Body of pancreas (tissue), 4 donors: ENCODE measurements at regions of chr1 and their contacts with region 1.

Region 1: GRCh38 chr1:6052543-6053205 is 7.0 kb downstream of the KCNAB2 start:
- DNase-seq: peak; percentile 62 to 77 (median 66)
- ATAC-seq: no peak
- H3K4me3 ChIP-seq: no peak overlapping the region
- H3K27ac ChIP-seq: no peak overlapping the region
- H3K4me1 ChIP-seq: no peaks in the 10 kb centered on the region
- H3K27me3 ChIP-seq: no peaks in the 10 kb centered on the region
- CTCF ChIP-seq: peak in 5 of 7 experiments; percentile 14 to 40 (median 22)
- POLR2A ChIP-seq: no peak

Region 2: DNA sequence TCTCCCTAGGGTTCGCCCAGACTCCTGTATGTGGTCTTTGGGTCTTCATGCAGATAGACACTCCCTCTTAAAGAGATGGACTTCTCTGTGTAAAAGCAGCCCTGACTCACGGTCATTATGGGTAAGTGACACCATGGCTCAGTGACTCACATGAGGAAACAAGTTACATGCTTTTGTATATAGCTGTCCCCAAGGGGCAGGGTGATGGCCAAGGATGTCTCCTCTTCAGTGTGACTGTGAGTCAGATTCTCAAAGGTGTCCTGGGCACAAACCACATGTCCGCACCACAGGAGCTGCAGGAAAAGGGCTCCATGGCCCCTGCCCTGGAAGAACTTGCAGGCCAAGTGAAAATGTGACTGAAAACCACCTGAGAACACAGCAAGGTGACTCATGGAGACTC is 440.8 kb before region 1 on chr1:
- intact Hi-C with region 1: no loop called
- DNase-seq: no peak
- ATAC-seq: no peak
- H3K4me3 ChIP-seq: no peak overlapping the region
- H3K27ac ChIP-seq: no peak overlapping the region
- H3K4me1 ChIP-seq: no peaks in the 10 kb centered on the region
- H3K27me3 ChIP-seq: no peaks in the 10 kb centered on the region
- CTCF ChIP-seq: no peak
- POLR2A ChIP-seq: no peak

Region 3: DNA sequence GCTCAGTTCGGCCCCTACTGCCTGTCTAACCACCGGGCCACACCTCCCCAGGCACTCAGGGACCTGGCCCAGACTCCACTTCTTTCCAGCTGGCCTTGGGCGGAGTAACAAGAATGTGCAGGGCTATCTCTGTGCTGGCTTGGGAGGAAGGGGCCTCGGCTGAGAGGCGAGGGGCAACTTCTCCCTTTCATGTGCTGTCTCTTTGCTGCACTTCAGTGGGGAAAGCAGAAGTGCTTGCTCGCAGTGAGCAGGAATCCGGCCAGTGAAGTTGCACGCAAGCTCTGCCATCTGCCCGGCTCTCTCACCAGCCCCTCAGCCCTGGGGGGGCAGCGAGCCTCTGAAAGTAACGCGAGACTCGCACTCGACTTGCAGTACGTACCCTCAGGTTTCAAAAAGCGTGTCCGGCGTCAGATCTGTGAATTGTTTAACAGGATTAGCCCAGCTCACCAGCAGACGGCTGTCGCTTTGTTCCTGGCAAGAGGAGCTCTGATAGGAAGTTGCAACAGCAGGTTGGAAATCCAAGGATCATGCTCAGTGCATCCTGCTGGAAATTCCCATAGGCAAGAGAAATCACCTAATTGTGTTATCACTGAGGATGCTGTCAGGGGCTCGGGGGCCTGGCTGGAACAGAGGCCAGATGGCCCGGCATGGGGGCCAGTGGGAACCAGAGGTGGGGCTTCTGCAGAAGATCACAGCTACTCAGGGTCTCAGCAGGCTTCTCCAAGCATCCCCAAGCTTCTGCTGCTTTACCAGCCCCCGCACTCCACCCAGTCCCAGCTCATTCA is 281.5 kb before region 1 on chr1:
- intact Hi-C with region 1: no loop called
- DNase-seq: peak in 2 of 4 donors; percentile 13 to 14
- ATAC-seq: no peak
- H3K4me3 ChIP-seq: no peak overlapping the region
- H3K27ac ChIP-seq: no peak overlapping the region
- H3K4me1 ChIP-seq: peaks cover 8% of the 10 kb centered on the region
- H3K27me3 ChIP-seq: no peaks in the 10 kb centered on the region
- CTCF ChIP-seq: no peak
- POLR2A ChIP-seq: no peak

Region 4: DNA sequence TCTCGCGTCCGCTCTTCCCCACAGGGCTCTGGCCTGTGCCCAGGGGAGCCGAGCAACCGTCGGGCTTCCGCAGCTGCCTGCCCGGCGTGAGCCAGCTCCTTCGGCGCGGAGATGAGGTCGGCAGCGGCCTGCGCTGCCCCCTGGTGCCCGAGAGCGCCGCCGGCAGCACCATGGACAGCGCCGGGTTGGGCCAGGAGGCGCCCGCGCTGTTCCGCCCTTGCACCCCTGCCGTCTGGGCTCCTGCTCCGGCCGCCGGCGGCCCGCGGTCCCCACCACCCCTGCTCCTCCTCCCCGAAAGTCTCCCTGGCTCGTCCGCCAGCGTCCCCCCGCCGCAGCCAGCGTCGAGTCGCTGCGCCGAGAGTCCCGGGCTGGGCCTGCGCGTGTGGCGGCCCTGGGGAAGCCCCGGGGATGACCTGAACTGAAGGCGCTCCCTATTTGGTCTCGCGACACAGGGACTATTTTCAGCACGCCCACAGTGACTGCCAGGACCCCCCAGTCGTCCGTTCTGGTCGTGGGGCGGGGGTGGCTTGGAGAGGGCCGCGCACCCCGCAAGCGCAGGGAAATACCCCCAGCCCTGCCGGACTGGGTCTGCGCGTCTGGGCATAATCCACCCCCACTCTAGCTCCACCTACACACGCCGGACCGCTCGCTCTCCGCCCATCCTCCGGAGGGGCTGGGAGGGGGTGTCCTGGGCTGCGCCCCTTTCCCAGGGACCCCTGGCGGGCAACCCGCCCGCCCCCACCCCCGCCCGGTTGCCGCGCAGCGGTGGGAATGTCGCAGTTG is 192.6 kb after region 1 on chr1:
- intact Hi-C with region 1: loop called (anchors 10 kb)
- DNase-seq: peak; percentile 83 to 87 (median 83)
- ATAC-seq: peak; percentile 86
- H3K4me3 ChIP-seq: no peak overlapping the region
- H3K27ac ChIP-seq: no peak overlapping the region
- H3K4me1 ChIP-seq: peaks cover 35% of the 10 kb centered on the region
- H3K27me3 ChIP-seq: peaks cover 4 to 49% of the 10 kb centered on the region in 2 donors
- CTCF ChIP-seq: peak; percentile 75 to 97 (median 88)
- POLR2A ChIP-seq: peak in 1 of 3 donors; percentile 7